ENCODE measurements at regions of chr20 and their contacts with region 1.

Region 1: DNA sequence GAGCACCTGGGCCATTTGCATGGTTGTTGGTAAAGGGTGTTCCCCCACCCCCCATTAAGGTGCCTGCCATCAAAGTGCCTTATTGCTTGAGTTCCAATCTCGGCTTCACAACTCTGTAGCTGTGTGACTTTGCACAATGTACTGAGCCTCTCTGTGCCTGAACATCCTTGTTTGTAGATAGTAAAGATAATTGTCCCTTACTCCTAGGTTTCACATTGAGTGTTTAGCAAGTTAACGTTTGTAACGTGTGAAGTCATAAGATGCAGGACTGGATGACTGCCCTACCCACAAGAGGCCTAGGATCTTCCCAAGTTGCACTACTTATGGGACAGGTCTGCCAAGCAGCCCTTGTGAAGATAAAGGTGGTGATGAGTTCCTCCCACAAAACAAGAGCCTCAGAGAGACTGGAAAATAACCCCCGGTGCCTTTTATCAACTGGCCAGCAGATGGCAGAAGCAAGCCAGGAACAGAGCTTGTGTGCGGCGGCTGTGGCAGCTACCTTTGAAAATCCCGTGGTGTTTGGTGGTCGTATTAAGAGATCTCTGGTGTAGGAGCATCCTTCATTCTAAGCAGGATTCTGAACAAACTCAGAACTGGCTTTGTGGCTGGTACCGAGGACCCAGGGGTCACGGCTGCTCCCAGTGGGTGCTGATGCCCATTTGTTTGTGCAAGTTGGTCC is 99.0 kb downstream of the CDH26 start:
- DNase-seq: no peak
- H3K4me3 ChIP-seq: no peak overlapping the region
- H3K27me3 ChIP-seq: no peaks in the 10 kb centered on the region
- CTCF ChIP-seq: peak; percentile 89

Region 2: GRCh38 chr20:59903621-59904020 is 153.6 kb before region 1 on chr20:
- CTCF ChIA-PET with region 1: no interaction called
- POLR2A ChIA-PET with region 1: no interaction called
- DNase-seq: no peak
- H3K4me3 ChIP-seq: no peak overlapping the region
- H3K27me3 ChIP-seq: no peaks in the 10 kb centered on the region
- CTCF ChIP-seq: no peak

Region 3: DNA sequence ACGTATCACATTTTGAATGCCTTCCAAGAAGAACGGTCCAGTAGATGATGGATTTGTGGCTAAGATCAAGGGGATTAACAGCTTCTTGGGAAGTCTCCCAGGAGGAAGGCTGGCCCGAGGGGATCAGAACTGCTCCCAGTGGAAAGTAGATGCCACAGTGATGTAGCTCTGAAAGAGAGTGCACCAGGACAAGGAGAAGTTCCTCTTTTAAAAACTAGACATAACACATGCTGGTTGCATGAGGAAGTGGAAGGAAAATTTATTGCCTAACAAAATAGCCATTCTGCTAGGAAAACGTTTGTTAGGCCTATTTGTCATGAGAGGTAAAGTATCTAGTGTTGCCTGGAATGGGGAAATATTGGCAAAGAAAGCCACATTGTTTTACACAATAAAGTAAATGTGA is 11.2 kb before region 1 on chr20:
- CTCF ChIA-PET with region 1: interaction called, 35 read pairs
- POLR2A ChIA-PET with region 1: no interaction called
- DNase-seq: peak; percentile 37
- H3K4me3 ChIP-seq: no peak overlapping the region
- H3K27me3 ChIP-seq: no peaks in the 10 kb centered on the region
- CTCF ChIP-seq: no peak

Region 4: GRCh38 chr20:60203451-60203850 is 146.2 kb after region 1 on chr20:
- CTCF ChIA-PET with region 1: interaction called, 65 read pairs
- POLR2A ChIA-PET with region 1: no interaction called
- DNase-seq: no peak
- H3K4me3 ChIP-seq: no peak overlapping the region
- H3K27me3 ChIP-seq: no peaks in the 10 kb centered on the region; the same call in 1 of the 2 replicates
- CTCF ChIP-seq: no peak

Region 5: DNA sequence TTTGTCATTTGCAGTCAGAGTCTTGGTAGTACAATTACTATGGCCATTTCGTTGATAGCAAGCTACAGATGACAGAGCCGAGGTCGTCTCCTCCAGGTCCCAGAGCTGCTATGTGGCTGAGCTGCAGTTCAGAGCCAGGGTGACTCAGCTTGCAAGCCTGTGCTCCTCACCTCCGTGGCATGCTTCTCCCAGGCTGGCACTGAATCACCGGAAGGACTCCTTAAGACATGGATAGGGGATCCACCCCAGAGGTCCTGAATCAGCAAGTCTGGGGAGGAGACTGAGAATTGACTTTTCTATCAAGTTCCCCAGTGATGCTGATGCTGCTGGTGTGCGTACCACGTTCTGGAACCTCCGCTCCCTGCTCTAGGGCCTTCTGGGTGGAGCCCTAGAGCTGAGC is 192.2 kb after region 1 on chr20:
- CTCF ChIA-PET with region 1: interaction called, 10 read pairs
- POLR2A ChIA-PET with region 1: no interaction called
- DNase-seq: peak; percentile 75
- H3K4me3 ChIP-seq: no peak overlapping the region
- H3K27me3 ChIP-seq: no peaks in the 10 kb centered on the region
- CTCF ChIP-seq: no peak

Measured in BJ (cell line).